ENCODE measurements at regions of chr5 and their contacts with region 1.

Region 1: GRCh38 chr5:35777358-35778087 is 79.2 kb upstream of the IL7R start:
- DNase-seq: peak; percentile 87
- H3K4me3 Mint-ChIP-seq: no peak overlapping the region
- H3K27ac Mint-ChIP-seq: no peak overlapping the region
- H3K4me1 Mint-ChIP-seq: peaks cover 34% of the 10 kb centered on the region
- H3K27me3 Mint-ChIP-seq: no peaks in the 10 kb centered on the region
- CTCF ChIP-seq: peak; percentile 47

Region 2: GRCh38 chr5:35202319-35203111 is 575.0 kb before region 1 on chr5:
- CTCF ChIA-PET with region 1: no interaction called
- POLR2A ChIA-PET with region 1: no interaction called
- intact Hi-C with region 1: no loop called
- DNase-seq: peak; percentile 74
- H3K4me3 Mint-ChIP-seq: no peak overlapping the region
- H3K27ac Mint-ChIP-seq: no peak overlapping the region
- H3K4me1 Mint-ChIP-seq: peaks cover 17% of the 10 kb centered on the region
- H3K27me3 Mint-ChIP-seq: peaks cover 14% of the 10 kb centered on the region
- CTCF ChIP-seq: peak; percentile 26

Region 3: GRCh38 chr5:35617435-35618303 is 159.9 kb before region 1 on chr5 and contains the start of gene SPEF2:
- CTCF ChIA-PET with region 1: no interaction called
- POLR2A ChIA-PET with region 1: no interaction called
- intact Hi-C with region 1: loop called (anchors 10 kb)
- DNase-seq: peak; percentile 86
- H3K4me3 Mint-ChIP-seq: peak within 1 kb of the TSS; percentile 85
- H3K27ac Mint-ChIP-seq: peak within 1 kb of the TSS; percentile 77
- H3K4me1 Mint-ChIP-seq: no peaks in the 10 kb centered on the region
- H3K27me3 Mint-ChIP-seq: no peaks in the 10 kb centered on the region
- CTCF ChIP-seq: peak; percentile 85
- total RNA-seq, gene SPEF2: 5.3 and 5.6 TPM in 2 replicates

Region 4: DNA sequence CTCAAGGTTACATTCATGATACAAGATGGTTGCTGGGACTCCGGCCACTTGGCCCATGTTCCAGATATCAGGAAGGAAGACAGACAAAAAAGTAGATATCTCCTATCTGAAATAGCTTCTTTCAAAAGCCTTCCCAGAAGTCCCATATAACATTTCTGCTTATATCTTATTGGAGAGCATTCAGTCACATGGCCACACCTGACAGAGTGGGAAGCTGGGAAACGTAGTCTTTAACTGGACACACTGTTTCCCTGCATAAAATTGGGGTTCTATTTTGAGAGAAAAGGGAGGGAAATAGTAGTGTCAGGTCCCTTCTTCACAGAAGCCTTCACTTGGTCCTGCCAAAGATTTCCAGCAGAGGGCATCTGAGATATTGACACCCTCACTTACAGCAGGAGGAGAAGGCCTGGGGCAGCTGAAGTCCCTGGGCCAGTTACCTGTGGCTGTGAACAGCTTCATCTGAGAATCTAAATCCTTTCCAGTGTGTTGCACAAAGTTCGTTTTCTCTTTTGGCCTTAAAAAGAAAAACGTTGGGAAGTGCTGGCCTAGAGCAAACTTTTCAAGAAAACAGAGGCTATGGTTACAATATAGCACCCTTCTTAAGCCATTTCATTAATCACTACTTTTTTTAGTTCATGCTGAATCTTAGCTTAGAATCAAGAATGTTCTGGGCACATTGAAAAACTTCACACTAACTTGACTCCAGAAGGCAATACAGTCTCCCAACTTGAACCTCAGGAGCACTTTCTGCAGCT is 126.3 kb before region 1 on chr5:
- CTCF ChIA-PET with region 1: interaction called, 14 read pairs
- POLR2A ChIA-PET with region 1: no interaction called
- intact Hi-C with region 1: loop called (anchors 2 kb)
- DNase-seq: peak; percentile 68
- H3K4me3 Mint-ChIP-seq: no peak overlapping the region
- H3K27ac Mint-ChIP-seq: no peak overlapping the region
- H3K4me1 Mint-ChIP-seq: no peaks in the 10 kb centered on the region
- H3K27me3 Mint-ChIP-seq: no peaks in the 10 kb centered on the region
- CTCF ChIP-seq: peak; percentile 49

Region 5: GRCh38 chr5:35789732-35790456 is 12.4 kb after region 1 on chr5:
- CTCF ChIA-PET with region 1: interaction called, 27 read pairs
- POLR2A ChIA-PET with region 1: no interaction called
- intact Hi-C with region 1: no loop called
- DNase-seq: no peak
- H3K4me3 Mint-ChIP-seq: no peak overlapping the region
- H3K27ac Mint-ChIP-seq: no peak overlapping the region
- H3K4me1 Mint-ChIP-seq: no peaks in the 10 kb centered on the region
- H3K27me3 Mint-ChIP-seq: no peaks in the 10 kb centered on the region
- CTCF ChIP-seq: no peak